Activated T-helper 1 cell treated with anti-CD3 and anti-CD28 coated beads, Interleukin-12 subunit alpha, Interleukin-12 subunit beta, Interleukin-2, Interleukin-4 antibody, amounts not matched to agents 30 ng/mL and 10 ng/mL and 1 ng/mL, durations not matched to agents 14 hours and 24 hours and 36 hours (primary cell): ENCODE measurements at regions of chr5 and their contacts with region 1.

Region 1: GRCh38 chr5:139517683-139518564 is 35.4 kb upstream of the STING1 start:
- DNase-seq: peak; percentile 88
- H3K4me3 Mint-ChIP-seq: peak overlapping the region; percentile 86
- H3K27ac Mint-ChIP-seq: peak overlapping the region; percentile 90
- H3K4me1 Mint-ChIP-seq: peaks cover 36% of the 10 kb centered on the region
- H3K27me3 Mint-ChIP-seq: peaks cover 2% of the 10 kb centered on the region

Region 2: DNA sequence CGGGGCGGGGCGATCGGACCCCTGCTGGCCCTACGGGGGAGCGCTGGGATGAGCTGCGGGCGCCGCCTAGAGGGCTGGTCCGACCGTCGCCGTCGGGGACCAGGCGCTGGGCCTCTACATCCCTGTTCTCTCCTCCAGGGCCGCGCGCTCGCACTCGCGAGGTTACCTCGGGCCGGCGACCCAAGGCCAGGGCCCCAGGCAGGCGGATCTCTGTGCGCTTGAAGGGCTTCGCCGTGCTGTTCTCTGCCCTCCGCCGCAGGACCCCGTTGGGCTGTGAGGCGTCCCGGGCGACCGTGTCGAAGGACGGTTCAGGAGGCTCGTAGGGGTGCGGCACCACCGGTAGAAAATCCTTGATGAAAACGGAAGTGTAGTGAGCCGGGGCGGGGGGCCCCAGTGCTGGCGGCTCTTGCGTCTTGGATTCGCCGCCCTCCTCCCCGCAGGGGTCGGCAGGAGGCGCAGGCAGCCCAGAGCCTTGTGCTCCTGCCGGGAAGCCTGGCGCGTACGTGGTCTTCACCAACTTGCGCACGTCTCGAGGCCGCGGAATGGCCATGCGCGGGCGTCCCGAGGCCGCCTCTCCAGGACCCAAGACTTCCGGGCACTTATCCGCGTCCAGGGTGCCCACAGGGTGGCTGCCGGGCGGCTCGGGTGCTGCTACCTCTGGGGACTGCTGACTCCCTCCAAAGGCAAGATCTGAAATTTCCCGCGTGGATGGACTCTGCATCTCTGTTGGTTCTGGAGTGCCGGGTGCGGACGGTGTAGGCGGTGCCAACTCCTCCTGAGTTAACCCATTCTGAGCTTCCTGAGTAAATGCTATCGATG is 125.0 kb before region 1 on chr5:
- intact Hi-C with region 1: loop called (anchors 1 kb)
- DNase-seq: peak; percentile 84
- H3K4me3 Mint-ChIP-seq: peak overlapping the region; percentile 96
- H3K27ac Mint-ChIP-seq: peak overlapping the region; percentile 95
- H3K4me1 Mint-ChIP-seq: peaks cover 58% of the 10 kb centered on the region
- H3K27me3 Mint-ChIP-seq: no peaks in the 10 kb centered on the region

Region 3: DNA sequence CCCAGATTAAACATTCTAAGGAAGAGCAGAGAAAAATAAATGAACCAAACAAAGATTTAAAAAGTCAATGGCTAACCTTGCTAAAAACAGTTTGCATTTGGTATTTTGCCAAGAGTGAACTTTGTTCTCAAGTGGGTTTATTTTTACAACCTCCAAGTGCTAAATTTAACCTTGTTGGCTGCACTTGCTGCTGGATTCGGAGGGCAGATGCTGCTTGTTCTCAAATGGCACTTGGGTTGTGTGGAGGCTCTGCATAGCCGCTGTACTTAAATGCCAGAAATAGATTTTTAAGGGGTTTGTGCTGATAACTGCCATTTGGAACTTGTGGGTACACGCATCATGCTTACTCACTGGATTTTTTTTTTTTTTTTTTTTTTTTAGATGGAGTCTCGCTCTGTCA is 100.7 kb before region 1 on chr5:
- intact Hi-C with region 1: loop called (anchors 1 kb)
- DNase-seq: no peak
- H3K4me3 Mint-ChIP-seq: no peak overlapping the region
- H3K27ac Mint-ChIP-seq: peak overlapping the region; percentile 94
- H3K4me1 Mint-ChIP-seq: peaks cover 61% of the 10 kb centered on the region
- H3K27me3 Mint-ChIP-seq: no peaks in the 10 kb centered on the region

Region 4: GRCh38 chr5:139439013-139439903 is 78.7 kb before region 1 on chr5 and contains the start of gene DNAJC18:
- intact Hi-C with region 1: loop called (anchors 2 kb)
- DNase-seq: peak; percentile 86
- H3K4me3 Mint-ChIP-seq: peak within 1 kb of the TSS; percentile 95
- H3K27ac Mint-ChIP-seq: peak within 1 kb of the TSS; percentile 99
- H3K4me1 Mint-ChIP-seq: peaks cover 66% of the 10 kb centered on the region
- H3K27me3 Mint-ChIP-seq: no peaks in the 10 kb centered on the region
- total RNA-seq, gene DNAJC18: 30.0 and 36.3 TPM in 2 replicates

Region 5: DNA sequence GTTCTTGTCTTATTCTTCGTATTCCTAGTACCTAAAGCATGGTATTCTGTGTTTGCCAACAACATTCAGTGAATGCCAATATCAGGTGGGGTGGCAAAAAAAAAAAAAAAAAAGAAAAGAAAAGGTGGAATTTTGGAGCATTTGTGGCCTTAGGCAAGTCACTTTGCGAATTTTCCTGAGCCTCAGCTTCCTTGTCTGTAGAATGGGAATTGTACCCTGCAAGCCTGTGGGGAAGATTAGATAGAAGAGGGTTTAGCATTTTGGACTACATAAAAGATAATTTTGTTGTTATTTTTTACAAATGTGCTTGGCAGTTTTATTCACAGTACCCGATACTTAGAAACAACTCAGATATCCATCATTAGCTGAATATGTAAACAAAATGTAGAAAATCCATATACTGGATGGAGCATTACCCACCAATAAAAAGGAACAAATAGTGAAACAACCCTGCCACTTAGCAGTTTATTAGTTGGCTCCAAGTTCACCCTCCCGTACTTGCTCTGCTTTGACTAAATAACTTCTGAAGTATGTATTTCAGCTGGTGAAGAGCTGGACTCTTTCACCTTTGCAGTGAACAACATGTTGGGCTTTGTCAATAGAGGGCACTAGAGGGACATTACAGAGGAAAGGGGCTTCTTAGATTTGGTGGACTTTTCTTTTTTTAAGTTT is 56.9 kb after region 1 on chr5:
- intact Hi-C with region 1: loop called (anchors 5 kb)
- DNase-seq: no peak
- H3K4me3 Mint-ChIP-seq: no peak overlapping the region
- H3K27ac Mint-ChIP-seq: no peak overlapping the region
- H3K4me1 Mint-ChIP-seq: peaks cover 64% of the 10 kb centered on the region
- H3K27me3 Mint-ChIP-seq: no peaks in the 10 kb centered on the region

Region 6: GRCh38 chr5:139765409-139766217 is 247.7 kb after region 1 on chr5:
- intact Hi-C with region 1: loop called (anchors 1 kb)
- DNase-seq: peak; percentile 68
- H3K4me3 Mint-ChIP-seq: peak overlapping the region; percentile 75
- H3K27ac Mint-ChIP-seq: peak overlapping the region; percentile 47
- H3K4me1 Mint-ChIP-seq: peaks cover 14% of the 10 kb centered on the region
- H3K27me3 Mint-ChIP-seq: peaks cover 46% of the 10 kb centered on the region